Panc1 (cell line): ENCODE measurements at regions of chr11 and their contacts with region 1.

Region 1: GRCh38 chr11:5600374-5600851 is 4.0 kb downstream of the TRIM6 start:
- DNase-seq: peak; percentile 82
- ATAC-seq: peak; percentile 86
- H3K4me3 ChIP-seq: peak overlapping the region; percentile 23 to 24
- H3K27ac ChIP-seq: peak overlapping the region; percentile 86
- H3K4me1 ChIP-seq: peaks cover 38% of the 10 kb centered on the region
- H3K27me3 ChIP-seq: no peaks in the 10 kb centered on the region
- CTCF ChIP-seq: peak; percentile 98

Region 2: GRCh38 chr11:5489576-5490357 is 110.6 kb before region 1 on chr11:
- CTCF ChIA-PET with region 1: no interaction called
- POLR2A ChIA-PET with region 1: no interaction called
- in situ Hi-C with region 1: no loop called
- intact Hi-C with region 1: no loop called
- DNase-seq: no peak
- ATAC-seq: no peak
- H3K4me3 ChIP-seq: no peak overlapping the region
- H3K27ac ChIP-seq: no peak overlapping the region
- H3K4me1 ChIP-seq: no peaks in the 10 kb centered on the region
- H3K27me3 ChIP-seq: peaks cover 7% of the 10 kb centered on the region
- CTCF ChIP-seq: no peak

Region 3: DNA sequence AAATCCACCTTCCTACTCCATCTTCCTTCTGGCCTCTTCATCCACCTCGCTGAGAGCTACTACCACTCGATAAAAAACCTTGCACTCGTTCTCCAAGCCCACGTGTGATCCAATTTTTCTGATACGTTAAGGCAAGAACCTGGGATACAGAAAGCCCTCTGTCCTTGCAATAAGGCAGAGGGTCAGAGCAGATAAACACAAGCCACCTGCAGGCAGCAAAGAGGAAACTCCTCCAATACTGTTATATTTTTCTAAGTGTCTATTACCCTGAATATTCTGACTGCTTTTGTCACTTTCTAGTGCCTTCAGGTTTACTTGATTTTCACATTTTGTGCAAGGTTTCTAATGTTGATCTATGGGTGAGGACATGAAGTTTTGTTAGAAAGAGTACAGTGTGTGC is 57.9 kb after region 1 on chr11:
- CTCF ChIA-PET with region 1: no interaction called
- POLR2A ChIA-PET with region 1: no interaction called
- in situ Hi-C with region 1: no loop called
- intact Hi-C with region 1: no loop called
- DNase-seq: no peak
- ATAC-seq: peak; percentile 42; the same call in 1 of the 2 replicates
- H3K4me3 ChIP-seq: no peak overlapping the region
- H3K27ac ChIP-seq: no peak overlapping the region
- H3K4me1 ChIP-seq: no peaks in the 10 kb centered on the region
- H3K27me3 ChIP-seq: no peaks in the 10 kb centered on the region
- CTCF ChIP-seq: no peak

Region 4: DNA sequence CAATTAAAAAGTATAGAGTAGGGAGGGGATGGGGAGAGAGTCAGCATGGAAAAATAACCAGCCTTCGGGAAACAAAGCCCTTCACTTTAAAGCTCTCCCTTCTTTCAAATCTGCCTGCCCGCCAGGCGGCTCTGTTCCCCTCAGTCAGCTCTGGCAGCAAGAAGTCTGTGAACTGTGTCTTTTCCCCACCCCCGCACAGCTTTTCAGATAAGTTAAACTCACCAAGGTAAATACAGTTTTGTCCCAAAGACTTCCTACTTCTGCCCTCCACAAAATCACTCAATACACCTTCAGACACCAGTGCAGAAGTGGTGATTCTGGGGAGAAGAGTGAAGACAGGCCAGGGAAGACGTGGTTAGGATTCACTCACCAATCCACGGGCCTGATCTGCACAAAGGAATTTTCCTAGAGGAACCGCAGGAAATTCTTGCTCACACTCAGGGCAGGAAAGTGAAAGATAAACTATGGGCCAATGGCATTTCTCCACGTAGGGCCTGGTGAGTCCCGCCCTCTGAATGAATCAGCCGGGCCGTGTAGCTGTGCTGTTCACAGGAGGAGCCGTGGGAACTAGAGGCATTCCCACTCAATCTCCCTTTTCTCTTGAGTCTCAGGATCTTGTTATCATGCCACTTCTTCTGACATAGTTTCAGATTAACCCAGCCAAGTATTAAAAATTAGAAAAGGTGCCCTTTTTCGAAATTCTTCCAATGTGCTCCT is 84.4 kb after region 1 on chr11 and contains the start of gene TRIM5:
- CTCF ChIA-PET with region 1: interaction called, 9 read pairs
- POLR2A ChIA-PET with region 1: interaction called, 4 read pairs
- in situ Hi-C with region 1: no loop called
- intact Hi-C with region 1: loop called (anchors 5 kb)
- DNase-seq: peak; percentile 97
- ATAC-seq: peak; percentile 100
- H3K4me3 ChIP-seq: peak within 1 kb of the TSS; percentile 70 to 77
- H3K27ac ChIP-seq: peak within 1 kb of the TSS; percentile 98
- H3K4me1 ChIP-seq: peaks cover 3% of the 10 kb centered on the region; the same call in 1 of the 2 replicates
- H3K27me3 ChIP-seq: no peaks in the 10 kb centered on the region
- CTCF ChIP-seq: peak; percentile 86
- total RNA-seq, gene TRIM5: 56.1 TPM